Vagina (tissue), 2 donors: ENCODE measurements at regions of chr2 and their contacts with region 1.

Region 1: GRCh38 chr2:230987137-230988020 is 8.5 kb upstream of the SPATA3 start:
- DNase-seq: no peak
- H3K4me3 ChIP-seq: peak overlapping the region; percentile 24 to 50
- H3K27ac ChIP-seq: no peak overlapping the region
- H3K4me1 ChIP-seq: peaks cover 6% of the 10 kb centered on the region
- H3K27me3 ChIP-seq: no peaks in the 10 kb centered on the region
- CTCF ChIP-seq: peak; percentile 79 to 85 (median 82)
- POLR2A ChIP-seq: no peak

Region 2: GRCh38 chr2:229748950-229749349 is 1238.4 kb before region 1 on chr2:
- intact Hi-C with region 1: no loop called
- DNase-seq: no peak
- H3K4me3 ChIP-seq: no peak overlapping the region
- H3K27ac ChIP-seq: no peak overlapping the region
- H3K4me1 ChIP-seq: no peaks in the 10 kb centered on the region
- H3K27me3 ChIP-seq: no peaks in the 10 kb centered on the region
- CTCF ChIP-seq: no peak
- POLR2A ChIP-seq: no peak

Region 3: DNA sequence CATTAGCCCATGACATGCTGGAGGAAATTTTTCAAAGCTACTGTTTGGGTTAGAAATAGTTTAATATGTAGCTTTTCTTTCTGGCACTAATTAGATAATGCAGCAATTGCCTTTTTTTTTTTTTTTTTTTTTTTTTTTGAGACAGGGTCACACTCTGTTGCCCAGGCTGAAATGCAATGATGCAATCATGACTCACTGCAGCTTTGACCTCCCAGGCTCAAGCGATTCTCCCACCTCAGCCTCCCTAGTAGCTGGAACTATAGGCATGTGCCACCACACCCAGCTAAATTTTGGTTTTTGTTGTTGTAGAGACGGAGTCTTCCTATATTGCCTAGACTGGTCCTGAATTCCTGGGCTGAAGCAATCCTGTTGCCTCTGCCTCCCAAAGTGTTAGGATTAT is 435.2 kb before region 1 on chr2:
- intact Hi-C with region 1: no loop called
- DNase-seq: no peak
- H3K4me3 ChIP-seq: no peak overlapping the region
- H3K27ac ChIP-seq: no peak overlapping the region
- H3K4me1 ChIP-seq: no peaks in the 10 kb centered on the region
- H3K27me3 ChIP-seq: no peaks in the 10 kb centered on the region
- CTCF ChIP-seq: no peak
- POLR2A ChIP-seq: no peak

Region 4: DNA sequence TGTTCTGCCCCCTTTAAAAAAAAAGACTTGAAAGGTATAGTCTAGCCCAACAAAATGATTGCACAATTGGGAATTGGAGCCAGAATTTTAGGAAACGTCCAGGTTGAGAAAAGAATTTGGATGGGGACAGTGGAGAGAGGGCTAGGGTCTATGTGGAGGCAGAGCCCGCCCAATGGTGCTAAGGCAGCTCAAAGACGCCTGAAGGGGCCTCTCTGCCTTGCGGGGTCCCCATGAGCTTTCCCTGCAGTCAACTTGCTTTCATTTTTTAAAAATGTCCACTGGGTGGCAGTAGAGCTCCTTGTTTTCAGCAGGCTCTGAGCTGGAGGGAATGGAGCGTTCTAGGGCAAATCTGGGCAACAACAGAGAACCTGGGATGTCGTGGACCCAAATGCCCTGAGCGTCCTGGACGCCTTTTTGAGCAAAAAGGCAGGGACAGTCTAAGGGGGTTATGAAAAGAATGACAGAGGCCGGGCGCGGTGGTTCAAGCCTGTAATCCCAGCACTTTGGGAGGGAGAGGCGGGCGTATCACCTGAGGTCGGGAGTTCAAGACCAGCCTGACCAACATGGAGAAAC is 162.9 kb before region 1 on chr2:
- intact Hi-C with region 1: loop called (anchors 5 kb)
- DNase-seq: no peak
- H3K4me3 ChIP-seq: peak overlapping the region in 1 of 2 donors; percentile 39
- H3K27ac ChIP-seq: no peak overlapping the region
- H3K4me1 ChIP-seq: peaks cover 21% of the 10 kb centered on the region
- H3K27me3 ChIP-seq: no peaks in the 10 kb centered on the region
- CTCF ChIP-seq: peak; percentile 51 to 81 (median 63)
- POLR2A ChIP-seq: no peak